ENCODE measurements at regions of chr6 and their contacts with region 1.

Region 1: DNA sequence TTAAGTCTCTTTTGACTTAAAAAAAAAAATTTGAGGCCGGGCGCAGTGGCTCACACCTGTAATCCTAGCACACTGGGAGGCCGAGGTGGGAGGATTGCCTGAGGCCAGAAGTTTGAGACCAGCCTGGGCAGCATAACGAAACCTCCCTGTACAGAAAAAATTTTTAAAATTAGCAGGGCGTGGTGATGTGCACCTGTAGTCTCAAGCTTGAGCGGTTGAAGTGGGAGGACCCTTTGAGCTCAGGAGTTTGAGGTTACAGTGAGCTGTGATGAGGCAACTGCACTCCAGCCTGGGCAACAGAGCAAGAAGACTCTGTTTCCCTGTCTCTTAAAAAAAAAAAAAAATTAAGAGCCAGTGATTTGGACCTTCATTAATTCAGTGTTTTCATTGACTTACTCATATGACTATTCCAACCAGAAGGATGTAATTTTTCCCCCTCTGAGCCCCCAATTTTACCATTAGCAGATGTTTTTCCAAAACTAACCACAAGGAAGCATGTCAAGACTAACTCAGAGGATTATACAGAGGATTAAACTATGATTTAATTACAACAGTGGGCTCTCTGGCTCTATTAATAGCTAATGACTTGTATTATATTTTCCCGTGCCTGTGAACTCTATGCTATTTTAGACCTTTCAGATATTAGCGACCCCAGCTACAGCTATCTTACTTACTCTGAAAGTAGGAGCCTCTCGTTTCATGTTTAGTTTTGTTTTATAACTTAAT is 75.1 kb downstream of the ARID1B start:
- DNase-seq: peak in 1 of 2 donors; percentile 28
- ATAC-seq: no peak
- H3K4me3 ChIP-seq: no peak overlapping the region
- H3K4me3 Mint-ChIP-seq: no peak overlapping the region
- H3K27ac ChIP-seq: no peak overlapping the region
- H3K27ac Mint-ChIP-seq: peak overlapping the region in 1 of 2 donors; percentile 9
- H3K4me1 ChIP-seq: peaks cover 33% of the 10 kb centered on the region
- H3K4me1 Mint-ChIP-seq: peaks cover 91 to 95% of the 10 kb centered on the region in 2 donors
- H3K27me3 ChIP-seq: no peaks in the 10 kb centered on the region
- H3K27me3 Mint-ChIP-seq: no peaks in the 10 kb centered on the region
- CTCF ChIP-seq: no peak

Region 2: DNA sequence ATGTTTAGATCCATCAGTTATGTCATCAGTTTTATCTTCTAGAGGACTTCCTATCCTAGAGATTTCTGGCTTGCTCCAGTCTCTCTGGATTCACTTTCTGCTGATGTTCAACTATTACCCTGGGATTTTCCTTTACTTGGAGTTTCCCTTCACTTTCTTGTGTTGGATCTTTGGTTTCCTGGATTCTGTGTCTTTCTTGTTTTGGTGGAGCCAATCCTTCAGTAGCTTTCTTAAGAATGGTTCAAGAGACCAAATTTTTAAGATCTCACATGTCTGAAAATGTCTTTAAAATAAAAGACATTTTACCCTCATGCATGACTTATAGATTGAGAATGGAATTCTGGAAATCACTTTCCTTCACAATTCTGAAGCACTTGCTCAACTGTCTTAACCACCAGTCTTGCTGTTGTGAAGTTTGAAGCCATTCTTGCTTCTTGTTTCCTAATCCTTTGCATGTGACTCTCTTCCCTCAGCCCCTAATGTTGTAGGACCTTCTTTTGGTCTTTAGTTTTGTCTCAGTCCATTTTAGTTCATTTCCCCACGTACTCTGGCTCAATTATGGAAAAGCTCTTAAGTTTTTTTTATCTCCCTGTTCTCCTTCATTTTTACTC is 12.8 kb after region 1 on chr6:
- intact Hi-C with region 1: loop called (anchors 2 kb)
- DNase-seq: no peak
- ATAC-seq: no peak
- H3K4me3 ChIP-seq: no peak overlapping the region
- H3K4me3 Mint-ChIP-seq: no peak overlapping the region
- H3K27ac ChIP-seq: no peak overlapping the region
- H3K27ac Mint-ChIP-seq: peak overlapping the region; percentile 1
- H3K4me1 ChIP-seq: peaks cover 19% of the 10 kb centered on the region
- H3K4me1 Mint-ChIP-seq: peaks cover 69 to 73% of the 10 kb centered on the region in 2 donors
- H3K27me3 ChIP-seq: no peaks in the 10 kb centered on the region
- H3K27me3 Mint-ChIP-seq: no peaks in the 10 kb centered on the region
- CTCF ChIP-seq: no peak

Measured in natural killer cell (primary cell).